Dorsolateral prefrontal cortex (tissue), 120 donors: ENCODE measurements at regions of chr21 and their contacts with region 1.

Region 1: GRCh38 chr21:15140321-15141019 is 75.7 kb upstream of the NRIP1 start:
- DNase-seq: no peak
- H3K4me3 ChIP-seq: peak overlapping the region in 1 of 59 donors; percentile 9
- H3K27ac ChIP-seq: no peak overlapping the region
- H3K27me3 ChIP-seq: peaks cover 0 to 7% (median 0%) of the 10 kb centered on the region in 45 donors
- CTCF ChIP-seq: no peak

Region 2: GRCh38 chr21:15206514-15206913 is 66.0 kb after region 1 on chr21:
- intact Hi-C with region 1: loop called in 1 of 2 experiments (anchors 10 kb)
- DNase-seq: no peak
- H3K4me3 ChIP-seq: no peak overlapping the region
- H3K27ac ChIP-seq: no peak overlapping the region
- H3K27me3 ChIP-seq: no peaks in the 10 kb centered on the region
- CTCF ChIP-seq: no peak